Panc1 (cell line): ENCODE measurements at regions of chr5 and their contacts with region 1.

Region 1: DNA sequence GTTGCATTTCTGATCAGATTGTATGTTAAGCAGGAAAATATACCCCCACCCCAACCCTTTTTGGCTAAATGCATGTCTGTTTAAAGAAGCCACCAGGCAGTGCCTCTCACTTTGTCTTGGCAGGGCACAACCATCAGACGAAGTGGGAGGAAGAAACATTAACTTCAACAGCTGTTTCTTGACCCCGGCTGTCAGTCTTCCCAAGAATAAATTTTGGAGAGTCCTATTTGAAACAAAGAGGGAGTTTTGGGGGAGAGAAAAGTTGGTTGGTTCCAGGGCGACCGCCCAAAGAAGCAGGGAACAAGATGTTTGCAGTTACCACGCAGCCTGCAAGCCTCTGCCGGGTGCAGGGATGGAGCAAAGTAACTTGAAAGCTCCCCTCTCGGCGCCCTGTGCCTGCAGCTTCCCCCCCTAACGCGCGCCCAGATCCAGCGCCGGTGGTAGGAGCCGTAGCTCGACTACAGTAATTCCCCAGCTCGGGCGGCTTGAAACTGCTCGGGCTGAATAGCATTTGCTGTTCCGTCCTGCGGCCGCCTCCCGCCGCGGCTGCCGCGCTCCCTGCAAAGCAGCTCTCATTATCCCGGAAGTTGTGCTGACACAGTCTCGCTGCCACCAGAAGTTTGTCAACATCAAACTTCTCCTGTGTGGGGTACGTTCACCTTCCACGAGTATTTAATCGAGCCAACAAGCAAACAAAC is 100.7 kb upstream of the SSBP2 start:
- DNase-seq: no peak
- ATAC-seq: peak; percentile 92
- H3K4me3 ChIP-seq: peak overlapping the region; percentile 34 to 55
- H3K27ac ChIP-seq: peak overlapping the region; percentile 89
- H3K4me1 ChIP-seq: peaks cover 28% of the 10 kb centered on the region
- H3K27me3 ChIP-seq: no peaks in the 10 kb centered on the region
- CTCF ChIP-seq: no peak

Region 2: GRCh38 chr5:81425569-81425968 is 426.1 kb before region 1 on chr5:
- CTCF ChIA-PET with region 1: no interaction called
- POLR2A ChIA-PET with region 1: no interaction called
- in situ Hi-C with region 1: no loop called
- intact Hi-C with region 1: loop called (anchors 10 kb)
- DNase-seq: no peak
- ATAC-seq: no peak
- H3K4me3 ChIP-seq: no peak overlapping the region
- H3K27ac ChIP-seq: no peak overlapping the region
- H3K4me1 ChIP-seq: peaks cover 27% of the 10 kb centered on the region
- H3K27me3 ChIP-seq: no peaks in the 10 kb centered on the region
- CTCF ChIP-seq: peak; percentile 61; the same call in 1 of the 2 replicates